ENCODE measurements at regions of chr10 and their contacts with region 1.

Region 1: DNA sequence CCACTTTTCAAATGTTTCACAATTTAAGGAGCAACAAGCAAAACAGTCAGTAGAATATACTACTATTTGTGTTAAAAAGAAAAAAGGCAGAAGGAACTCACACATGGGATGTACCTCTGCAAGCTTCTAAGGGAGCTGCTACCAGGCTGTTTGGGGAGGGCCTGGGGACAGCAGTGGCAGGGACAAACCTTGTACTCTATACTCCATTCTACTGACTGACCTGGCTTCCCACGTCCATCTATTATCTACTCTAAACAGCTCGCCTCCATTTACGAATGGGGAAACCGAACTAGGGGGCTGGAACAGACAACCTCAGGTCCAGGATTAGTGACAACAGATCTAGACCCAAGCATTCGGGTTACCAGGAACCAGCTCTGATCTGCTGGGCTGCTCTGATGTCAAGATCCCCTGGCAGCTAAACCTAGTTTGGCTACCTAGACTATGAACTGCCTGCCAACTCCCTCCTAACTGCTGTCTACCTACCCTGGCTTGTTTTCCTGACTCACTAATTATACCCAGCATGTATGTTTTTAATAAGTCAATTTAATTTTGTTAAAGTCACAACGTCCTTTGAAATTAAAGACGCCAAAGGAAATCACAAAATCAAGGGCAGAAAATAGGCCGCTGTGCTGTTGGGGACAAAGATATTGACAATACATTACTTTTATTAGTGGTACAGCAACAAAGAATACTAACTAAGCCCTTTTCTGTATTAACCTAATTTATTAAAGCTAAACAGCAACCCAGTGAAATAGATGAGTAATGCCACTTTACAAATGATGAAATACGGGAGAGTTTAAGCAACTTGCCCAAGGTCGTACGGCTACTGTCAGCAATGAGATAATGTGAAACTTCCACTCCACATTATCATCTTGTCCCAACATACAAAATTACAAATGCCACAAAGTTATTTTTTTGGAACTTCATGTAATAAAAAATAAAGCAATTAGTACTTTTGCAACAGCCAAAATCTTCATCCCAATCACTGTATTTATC is 5.3 kb downstream of the PSAP start:
- DNase-seq: no peak
- ATAC-seq: peak; percentile 47; the same call in 1 of the 2 replicates
- H3K4me3 ChIP-seq: peak overlapping the region; percentile 15 to 86; a peak in 3 of 4 replicates
- H3K27ac ChIP-seq: peak overlapping the region; percentile 96
- H3K4me1 ChIP-seq: peaks cover 75% of the 10 kb centered on the region
- H3K27me3 ChIP-seq: no peaks in the 10 kb centered on the region
- CTCF ChIP-seq: no peak

Region 2: GRCh38 chr10:71957546-71958275 is 112.0 kb after region 1 on chr10:
- CTCF ChIA-PET with region 1: no interaction called
- POLR2A ChIA-PET with region 1: interaction called, 11 read pairs
- in situ Hi-C with region 1: no loop called
- intact Hi-C with region 1: no loop called
- DNase-seq: no peak
- ATAC-seq: no peak
- H3K4me3 ChIP-seq: no peak overlapping the region
- H3K27ac ChIP-seq: no peak overlapping the region
- H3K4me1 ChIP-seq: no peaks in the 10 kb centered on the region; the same call in 1 of the 2 replicates
- H3K27me3 ChIP-seq: no peaks in the 10 kb centered on the region
- CTCF ChIP-seq: no peak; the same call in 1 of the 2 replicates